Activated CD8-positive, alpha-beta T cell treated with anti-CD3 and anti-CD28 coated beads for 36 hours (primary cell): ENCODE measurements at regions of chr9 and their contacts with region 1.

Region 1: GRCh38 chr9:128117613-128118471 is 9.7 kb downstream of the PTGES2 start:
- DNase-seq: peak; percentile 98
- ATAC-seq: peak; percentile 91
- H3K4me3 Mint-ChIP-seq: no peak overlapping the region
- H3K27ac Mint-ChIP-seq: no peak overlapping the region
- H3K4me1 Mint-ChIP-seq: peaks cover 10% of the 10 kb centered on the region
- H3K27me3 Mint-ChIP-seq: no peaks in the 10 kb centered on the region
- CTCF ChIP-seq: peak; percentile 100

Region 2: DNA sequence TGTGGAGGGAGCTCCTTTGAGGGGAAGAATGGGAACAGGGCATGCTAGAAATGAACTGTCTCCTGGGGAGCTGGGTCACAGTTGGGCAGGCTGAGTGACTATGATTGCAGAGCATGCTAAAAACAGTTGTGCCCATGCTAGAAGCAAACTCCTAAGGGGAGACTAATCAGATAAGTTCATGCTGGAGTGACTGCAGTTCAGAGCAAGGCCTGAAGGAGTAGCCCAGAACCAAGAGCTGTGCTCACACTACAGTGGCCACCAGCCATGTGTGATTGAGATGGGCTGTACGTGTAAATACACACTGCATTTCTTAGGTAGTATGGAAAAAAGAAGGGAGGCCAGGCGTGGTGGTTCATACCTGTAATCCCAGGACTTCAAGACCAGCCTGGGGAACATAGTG is 230.1 kb before region 1 on chr9:
- CTCF ChIA-PET with region 1: no interaction called
- POLR2A ChIA-PET with region 1: no interaction called
- intact Hi-C with region 1: no loop called
- DNase-seq: no peak
- ATAC-seq: peak; percentile 43
- H3K4me3 Mint-ChIP-seq: no peak overlapping the region
- H3K27ac Mint-ChIP-seq: no peak overlapping the region
- H3K4me1 Mint-ChIP-seq: peaks cover 5% of the 10 kb centered on the region
- H3K27me3 Mint-ChIP-seq: no peaks in the 10 kb centered on the region
- CTCF ChIP-seq: peak; percentile 28

Region 3: GRCh38 chr9:127943731-127944144 is 174.1 kb before region 1 on chr9:
- CTCF ChIA-PET with region 1: interaction called, 19 read pairs
- POLR2A ChIA-PET with region 1: no interaction called
- intact Hi-C with region 1: no loop called
- DNase-seq: peak; percentile 88
- ATAC-seq: peak; percentile 93
- H3K4me3 Mint-ChIP-seq: no peak overlapping the region
- H3K27ac Mint-ChIP-seq: peak overlapping the region; percentile 86
- H3K4me1 Mint-ChIP-seq: peaks cover 29% of the 10 kb centered on the region
- H3K27me3 Mint-ChIP-seq: no peaks in the 10 kb centered on the region
- CTCF ChIP-seq: peak; percentile 95

Region 4: DNA sequence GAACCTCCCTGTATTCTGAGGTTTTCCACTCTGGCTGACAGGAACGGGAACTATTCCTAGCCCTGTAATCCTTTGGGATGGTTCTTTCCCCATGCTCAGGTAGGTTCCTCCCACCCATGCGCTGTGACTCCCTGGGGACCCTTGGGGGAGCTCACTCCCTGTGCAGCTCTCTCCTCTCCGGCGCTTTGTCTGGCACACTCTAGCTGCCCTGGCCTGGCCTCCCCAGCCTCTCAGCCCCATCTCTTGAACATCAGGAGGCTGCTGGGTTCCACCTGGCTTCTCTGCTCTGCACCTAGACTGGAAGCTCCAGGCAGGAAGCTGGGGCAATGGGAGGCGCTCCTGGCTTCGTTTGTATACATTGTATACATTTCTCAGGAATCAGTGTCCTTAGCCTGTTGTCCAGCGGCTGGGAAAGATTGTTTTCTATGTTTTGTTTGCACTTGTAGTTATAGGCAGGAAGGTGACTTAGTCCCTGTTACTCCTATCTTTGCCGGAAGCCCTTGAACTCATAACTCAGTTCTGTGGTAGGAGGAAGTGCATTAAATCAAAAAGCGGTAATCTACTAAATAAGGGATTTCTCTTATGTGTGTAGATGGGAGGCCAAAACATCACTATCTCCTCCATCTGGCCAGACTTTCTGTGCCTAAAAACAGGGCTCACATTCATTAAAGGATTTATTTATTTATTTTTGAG is 29.4 kb before region 1 on chr9:
- CTCF ChIA-PET with region 1: interaction called, 94 read pairs
- POLR2A ChIA-PET with region 1: interaction called, 3 read pairs
- intact Hi-C with region 1: no loop called
- DNase-seq: no peak
- ATAC-seq: no peak
- H3K4me3 Mint-ChIP-seq: no peak overlapping the region
- H3K27ac Mint-ChIP-seq: peak overlapping the region; percentile 31
- H3K4me1 Mint-ChIP-seq: peaks cover 61% of the 10 kb centered on the region
- H3K27me3 Mint-ChIP-seq: no peaks in the 10 kb centered on the region
- CTCF ChIP-seq: no peak

Region 5: DNA sequence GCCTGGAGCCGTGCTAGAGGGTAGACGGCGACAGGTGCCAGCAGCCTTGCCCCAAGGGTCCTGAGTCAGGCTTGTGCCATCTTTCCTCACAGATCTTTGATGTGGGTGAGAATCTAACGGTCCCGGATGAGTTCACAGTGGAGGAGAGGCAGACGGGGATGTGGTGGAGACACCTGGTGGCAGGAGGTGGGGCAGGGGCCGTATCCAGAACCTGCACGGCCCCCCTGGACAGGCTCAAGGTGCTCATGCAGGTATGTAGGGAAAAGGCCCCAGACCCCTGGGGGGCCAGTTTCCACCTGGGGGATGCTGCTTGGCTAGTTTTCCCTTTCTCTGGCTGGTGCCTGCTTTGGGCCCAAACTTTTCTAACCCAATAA is 14.3 kb before region 1 on chr9:
- CTCF ChIA-PET with region 1: interaction called, 94 read pairs
- POLR2A ChIA-PET with region 1: interaction called, 5 read pairs
- intact Hi-C with region 1: no loop called
- DNase-seq: peak; percentile 68
- ATAC-seq: peak; percentile 74
- H3K4me3 Mint-ChIP-seq: no peak overlapping the region
- H3K27ac Mint-ChIP-seq: peak overlapping the region; percentile 75
- H3K4me1 Mint-ChIP-seq: peaks cover 49% of the 10 kb centered on the region
- H3K27me3 Mint-ChIP-seq: no peaks in the 10 kb centered on the region
- CTCF ChIP-seq: peak; percentile 53

Region 6: DNA sequence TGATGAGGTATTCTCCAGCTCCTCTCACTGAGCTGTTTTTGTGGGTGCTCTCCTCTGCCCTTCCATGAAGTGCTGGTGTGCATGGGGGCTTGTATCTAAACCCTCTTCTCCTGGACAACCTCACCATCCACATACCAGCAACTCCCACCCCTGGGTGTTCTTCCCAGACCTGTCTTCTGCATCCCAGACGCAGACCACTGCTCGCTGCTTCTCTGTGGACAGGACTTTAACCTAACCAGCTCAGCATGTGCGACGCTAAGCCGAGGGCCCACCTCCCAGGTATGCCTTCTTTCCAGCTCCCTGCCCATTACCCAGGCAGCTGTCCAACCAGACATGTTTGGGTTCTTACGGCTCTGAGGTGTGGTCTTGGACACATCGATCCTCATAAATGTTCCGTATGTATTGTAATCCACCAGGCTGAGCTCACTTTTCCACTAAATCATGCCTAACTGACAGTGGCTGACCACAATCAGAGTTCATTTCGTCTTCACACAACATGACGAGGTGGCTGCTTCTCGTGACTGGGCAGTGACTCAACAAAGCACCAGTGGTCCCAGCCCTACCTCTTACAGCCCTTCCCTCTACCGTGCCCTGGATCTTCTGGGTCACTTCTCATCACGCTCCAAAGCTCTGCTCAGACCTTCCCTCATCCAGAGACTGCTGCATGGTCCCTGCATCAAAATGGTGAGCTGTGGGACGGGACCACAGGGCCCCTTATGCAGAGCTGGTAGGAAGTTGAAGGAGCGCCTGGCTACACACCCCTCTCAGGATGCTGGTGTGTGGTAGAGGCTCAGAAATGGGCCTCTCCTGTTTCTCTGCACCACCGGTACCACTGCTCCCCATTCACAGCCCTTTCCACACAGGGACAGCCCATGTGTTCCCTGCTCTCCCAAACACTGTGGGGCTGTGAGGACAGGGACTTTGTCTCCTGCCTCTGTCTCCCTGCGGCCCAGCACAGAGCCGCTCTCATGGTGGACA is 19.3 kb after region 1 on chr9:
- CTCF ChIA-PET with region 1: interaction called, 11 read pairs
- POLR2A ChIA-PET with region 1: no interaction called
- intact Hi-C with region 1: no loop called
- DNase-seq: no peak
- ATAC-seq: no peak
- H3K4me3 Mint-ChIP-seq: no peak overlapping the region
- H3K27ac Mint-ChIP-seq: no peak overlapping the region
- H3K4me1 Mint-ChIP-seq: peaks cover 4% of the 10 kb centered on the region
- H3K27me3 Mint-ChIP-seq: peaks cover 2% of the 10 kb centered on the region
- CTCF ChIP-seq: no peak

Region 7: GRCh38 chr9:128396970-128397613 is 279.2 kb after region 1 on chr9:
- CTCF ChIA-PET with region 1: no interaction called
- POLR2A ChIA-PET with region 1: no interaction called
- intact Hi-C with region 1: no loop called
- DNase-seq: no peak
- ATAC-seq: no peak
- H3K4me3 Mint-ChIP-seq: no peak overlapping the region
- H3K27ac Mint-ChIP-seq: no peak overlapping the region
- H3K4me1 Mint-ChIP-seq: peaks cover 3% of the 10 kb centered on the region
- H3K27me3 Mint-ChIP-seq: peaks cover 12% of the 10 kb centered on the region
- CTCF ChIP-seq: no peak

Region 8: GRCh38 chr9:128696923-128697707 is 579.3 kb after region 1 on chr9:
- CTCF ChIA-PET with region 1: no interaction called
- POLR2A ChIA-PET with region 1: no interaction called
- intact Hi-C with region 1: no loop called
- DNase-seq: no peak
- ATAC-seq: no peak
- H3K4me3 Mint-ChIP-seq: no peak overlapping the region
- H3K27ac Mint-ChIP-seq: peak overlapping the region; percentile 55
- H3K4me1 Mint-ChIP-seq: peaks cover 22% of the 10 kb centered on the region
- H3K27me3 Mint-ChIP-seq: no peaks in the 10 kb centered on the region
- CTCF ChIP-seq: no peak